PC-3 (cell line): ENCODE measurements at regions of chrX and their contacts with region 1.

Region 1: DNA sequence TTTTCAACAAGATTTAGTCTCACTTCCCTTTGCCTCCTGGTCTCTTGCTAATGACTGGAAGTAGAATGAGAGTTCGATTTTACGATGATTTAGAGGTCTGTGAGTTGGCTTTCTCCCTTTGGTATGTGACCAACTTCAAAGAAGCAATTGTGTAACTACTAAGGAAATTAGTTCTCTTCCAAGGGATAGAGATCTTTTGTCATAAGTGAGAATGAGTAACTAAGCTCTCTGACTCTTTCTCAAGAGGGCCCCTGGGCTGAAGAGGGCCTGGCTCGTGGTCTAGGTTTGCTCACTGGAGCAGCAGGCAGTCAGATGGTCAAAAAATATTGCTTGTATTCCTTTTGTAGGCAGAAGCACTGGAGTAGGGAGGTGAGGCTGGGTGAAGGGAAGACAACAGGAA is 176.3 kb downstream of the ENOX2 start:
- DNase-seq: peak; percentile 39
- ATAC-seq: peak; percentile 17; the same call in 1 of the 2 replicates
- H3K4me3 ChIP-seq: no peak overlapping the region
- H3K27ac ChIP-seq: peak overlapping the region; percentile 15
- H3K4me1 ChIP-seq: peaks cover 19% of the 10 kb centered on the region; the same call in 1 of the 2 replicates
- H3K27me3 ChIP-seq: no peaks in the 10 kb centered on the region
- CTCF ChIP-seq: no peak

Region 2: GRCh38 chrX:130539721-130540321 is 186.8 kb before region 1 on chrX:
- CTCF ChIA-PET with region 1: interaction called, 7 read pairs
- POLR2A ChIA-PET with region 1: interaction called, 7 read pairs
- intact Hi-C with region 1: loop called (anchors 2 kb)
- DNase-seq: peak; percentile 63
- ATAC-seq: peak; percentile 55
- H3K4me3 ChIP-seq: no peak overlapping the region
- H3K27ac ChIP-seq: no peak overlapping the region
- H3K4me1 ChIP-seq: no peaks in the 10 kb centered on the region
- H3K27me3 ChIP-seq: no peaks in the 10 kb centered on the region
- CTCF ChIP-seq: peak; percentile 78

Region 3: GRCh38 chrX:130575831-130576389 is 150.8 kb before region 1 on chrX:
- CTCF ChIA-PET with region 1: interaction called, 13 read pairs
- POLR2A ChIA-PET with region 1: no interaction called
- intact Hi-C with region 1: loop called (anchors 1 kb)
- DNase-seq: peak; percentile 56
- ATAC-seq: peak; percentile 66
- H3K4me3 ChIP-seq: no peak overlapping the region
- H3K27ac ChIP-seq: no peak overlapping the region
- H3K4me1 ChIP-seq: peaks cover 12% of the 10 kb centered on the region
- H3K27me3 ChIP-seq: no peaks in the 10 kb centered on the region
- CTCF ChIP-seq: peak; percentile 82